Activated CD4-positive, alpha-beta T cell treated with anti-CD3 and anti-CD28 coated beads for 36 hours (primary cell): ENCODE measurements at regions of chr17 and their contacts with region 1.

Region 1: DNA sequence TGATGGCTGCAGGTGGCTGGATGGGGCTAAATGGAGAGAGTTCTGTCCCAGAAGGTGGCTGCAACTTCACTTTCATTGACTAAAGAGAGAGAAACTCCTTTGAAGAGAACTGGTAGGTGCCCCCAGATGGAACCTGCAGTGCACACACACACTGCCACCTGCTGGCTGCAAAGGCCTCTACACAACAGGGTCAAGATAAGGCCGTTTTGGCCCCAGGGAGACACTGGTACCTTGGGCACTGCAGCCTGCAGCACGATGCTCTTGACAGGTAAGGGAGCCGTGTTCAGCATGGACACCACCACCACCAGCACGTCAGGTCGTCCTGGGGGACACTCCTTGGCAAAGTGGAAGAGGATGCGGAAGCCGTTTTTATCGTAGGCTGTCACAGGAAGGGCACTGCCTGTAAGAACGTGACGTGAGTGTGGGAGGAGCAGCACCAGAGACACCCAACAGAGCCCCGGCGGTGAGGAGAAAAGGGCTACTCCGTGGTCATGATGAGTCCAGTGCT is 22.7 kb downstream of the GGA3 start:
- DNase-seq: peak; percentile 79
- ATAC-seq: peak; percentile 71
- H3K4me3 Mint-ChIP-seq: no peak overlapping the region
- H3K27ac Mint-ChIP-seq: peak overlapping the region; percentile 87
- H3K4me1 Mint-ChIP-seq: peaks cover 37% of the 10 kb centered on the region
- H3K27me3 Mint-ChIP-seq: no peaks in the 10 kb centered on the region

Region 2: DNA sequence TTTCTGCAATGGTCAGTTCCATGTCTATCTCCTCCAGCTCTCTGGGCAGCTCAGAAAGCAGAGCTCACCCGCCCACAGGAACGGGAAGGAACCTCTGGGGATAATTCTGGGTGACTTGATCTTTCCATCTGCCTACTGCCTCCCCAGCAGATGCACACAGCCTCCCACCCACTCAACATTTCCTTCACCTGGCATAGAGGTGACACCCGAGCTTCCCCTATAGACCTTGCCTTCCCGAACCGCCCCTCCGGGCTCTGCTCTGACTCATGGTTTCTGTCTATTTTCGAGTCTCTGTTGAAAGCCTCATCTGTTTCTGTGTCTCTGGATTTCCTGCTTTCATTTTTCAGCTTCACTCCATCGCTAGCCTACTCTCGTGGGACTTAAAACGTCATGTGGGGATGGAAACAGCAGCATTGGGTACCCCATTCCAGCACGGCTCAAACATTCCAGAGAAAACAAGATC is 11.3 kb after region 1 on chr17:
- CTCF ChIA-PET with region 1: interaction called, 50 read pairs
- POLR2A ChIA-PET with region 1: interaction called, 6 read pairs
- intact Hi-C with region 1: no loop called
- DNase-seq: peak; percentile 90
- ATAC-seq: peak; percentile 97
- H3K4me3 Mint-ChIP-seq: peak overlapping the region; percentile 64
- H3K27ac Mint-ChIP-seq: peak overlapping the region; percentile 97
- H3K4me1 Mint-ChIP-seq: peaks cover 74% of the 10 kb centered on the region
- H3K27me3 Mint-ChIP-seq: no peaks in the 10 kb centered on the region

Region 3: DNA sequence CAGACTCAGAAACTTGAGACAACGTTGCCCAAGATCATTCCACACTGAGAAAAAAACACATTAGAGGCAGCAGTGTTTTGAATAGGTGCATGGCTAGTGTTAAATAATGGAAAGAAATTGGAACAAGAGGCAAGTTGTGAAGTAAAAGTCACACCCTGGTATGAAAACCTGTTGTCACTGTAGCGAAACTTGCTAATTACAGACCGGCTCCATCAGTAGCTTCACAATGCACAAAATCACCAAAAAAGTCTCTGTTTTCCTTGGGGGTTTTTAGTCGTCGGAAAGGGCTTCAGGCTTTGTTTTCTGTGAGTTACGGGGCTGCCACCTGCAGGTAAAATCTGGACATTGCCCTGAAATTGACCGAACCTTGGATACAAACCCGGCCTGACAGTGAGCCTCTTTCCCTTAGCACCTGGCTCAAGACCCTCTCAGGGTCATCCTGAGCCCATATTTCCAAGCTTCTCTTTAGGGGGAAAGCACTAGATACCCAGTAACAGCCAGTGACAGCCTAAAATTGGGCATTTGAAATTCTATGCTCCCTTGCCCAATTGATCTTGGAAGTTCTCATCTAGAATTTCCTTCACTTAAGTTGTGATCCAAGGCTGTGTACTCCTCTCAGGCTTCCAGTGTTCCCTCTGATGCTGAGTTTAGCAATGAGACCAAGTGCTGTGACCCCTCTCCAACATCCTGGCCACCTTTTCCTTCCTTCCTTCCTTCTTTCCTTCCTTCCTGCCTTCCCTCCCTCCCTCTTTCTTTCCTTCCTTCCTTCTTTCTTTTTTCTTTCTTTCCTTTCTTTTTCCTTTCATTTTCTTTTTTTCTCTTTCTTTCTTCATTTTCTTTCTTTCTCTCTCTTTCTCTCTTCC is 173.9 kb after region 1 on chr17:
- CTCF ChIA-PET with region 1: interaction called, 16 read pairs
- POLR2A ChIA-PET with region 1: no interaction called
- intact Hi-C with region 1: loop called in 1 of 2 experiments (anchors 2 kb)
- DNase-seq: peak; percentile 84
- ATAC-seq: peak; percentile 85
- H3K4me3 Mint-ChIP-seq: peak overlapping the region; percentile 44
- H3K27ac Mint-ChIP-seq: peak overlapping the region; percentile 3
- H3K4me1 Mint-ChIP-seq: peaks cover 15% of the 10 kb centered on the region
- H3K27me3 Mint-ChIP-seq: no peaks in the 10 kb centered on the region

Region 4: DNA sequence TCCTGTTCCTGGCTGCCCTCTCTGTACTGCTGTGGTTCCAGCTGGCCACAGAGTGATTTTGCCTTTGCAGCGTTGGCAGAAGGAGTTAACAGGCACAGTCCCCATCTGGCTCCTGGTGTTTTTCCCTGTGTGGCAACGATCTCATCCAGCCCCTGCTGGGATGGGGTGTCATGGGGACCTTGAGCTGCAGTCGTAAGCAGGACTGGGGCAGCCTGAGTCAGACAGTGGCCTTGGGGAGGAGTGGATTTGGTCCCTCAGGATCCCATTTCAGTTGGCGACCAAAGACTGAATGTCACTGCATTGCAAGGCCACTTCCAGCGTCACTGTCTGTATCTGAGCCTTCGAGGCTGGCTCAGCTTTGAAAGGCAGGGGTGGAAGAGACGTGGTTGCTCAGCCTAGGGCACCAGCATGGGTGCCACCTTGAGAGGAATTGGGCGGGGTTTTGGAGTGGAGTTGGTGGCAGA is 229.6 kb after region 1 on chr17:
- CTCF ChIA-PET with region 1: no interaction called
- POLR2A ChIA-PET with region 1: no interaction called
- intact Hi-C with region 1: no loop called
- DNase-seq: no peak
- ATAC-seq: no peak
- H3K4me3 Mint-ChIP-seq: no peak overlapping the region
- H3K27ac Mint-ChIP-seq: no peak overlapping the region
- H3K4me1 Mint-ChIP-seq: no peaks in the 10 kb centered on the region
- H3K27me3 Mint-ChIP-seq: no peaks in the 10 kb centered on the region